Upper lobe of right lung (tissue), 1 donor: ENCODE measurements at regions of chr15 and their contacts with region 1.

Region 1: DNA sequence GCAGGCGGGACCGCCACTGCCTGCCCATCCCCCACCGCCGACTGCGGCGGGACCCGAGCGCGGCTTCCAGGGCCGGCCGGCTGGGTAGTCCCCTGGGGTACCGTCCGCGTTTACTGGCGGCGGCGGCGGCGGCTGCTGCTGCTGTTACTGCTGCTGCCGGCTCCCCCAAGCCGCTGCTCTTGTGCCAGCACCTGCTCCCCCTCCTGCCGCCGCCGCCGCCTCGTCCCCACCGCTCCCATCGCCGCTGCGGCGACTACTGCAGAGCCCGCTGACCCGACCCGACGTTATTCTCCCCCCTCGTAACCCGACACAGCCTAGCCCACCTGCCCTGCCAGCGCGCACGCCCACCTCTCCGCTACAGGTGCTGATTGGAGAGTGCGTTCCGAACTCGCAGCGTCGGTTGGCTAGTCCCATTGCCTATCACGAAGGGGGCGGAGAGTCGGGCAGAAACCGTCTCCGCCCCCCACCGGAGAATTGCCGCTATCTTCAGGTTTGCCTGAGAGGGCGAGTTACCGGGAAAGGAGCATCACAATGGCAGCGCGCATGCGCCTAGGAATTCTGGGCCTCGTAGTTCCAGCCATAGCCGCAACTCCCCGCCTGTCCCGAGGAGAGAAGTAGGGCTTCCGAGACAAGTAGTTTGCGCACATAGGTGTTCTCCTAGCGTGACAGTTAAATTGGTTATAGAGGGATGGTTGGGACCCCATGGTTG is at the start of gene TTBK2:
- DNase-seq: peak; percentile 99
- ATAC-seq: peak; percentile 99
- H3K4me3 ChIP-seq: peak within 1 kb of the TSS; percentile 95
- H3K27ac ChIP-seq: peak within 1 kb of the TSS; percentile 81
- H3K4me1 ChIP-seq: peaks cover 11% of the 10 kb centered on the region
- H3K27me3 ChIP-seq: no peaks in the 10 kb centered on the region
- CTCF ChIP-seq: peak; percentile 37
- total RNA-seq, gene TTBK2: 19.1 TPM

Region 2: GRCh38 chr15:42444415-42445063 is 476.1 kb before region 1 on chr15:
- intact Hi-C with region 1: no loop called
- DNase-seq: no peak
- ATAC-seq: no peak
- H3K4me3 ChIP-seq: no peak overlapping the region
- H3K27ac ChIP-seq: no peak overlapping the region
- H3K4me1 ChIP-seq: no peaks in the 10 kb centered on the region
- H3K27me3 ChIP-seq: no peaks in the 10 kb centered on the region
- CTCF ChIP-seq: no peak

Region 3: DNA sequence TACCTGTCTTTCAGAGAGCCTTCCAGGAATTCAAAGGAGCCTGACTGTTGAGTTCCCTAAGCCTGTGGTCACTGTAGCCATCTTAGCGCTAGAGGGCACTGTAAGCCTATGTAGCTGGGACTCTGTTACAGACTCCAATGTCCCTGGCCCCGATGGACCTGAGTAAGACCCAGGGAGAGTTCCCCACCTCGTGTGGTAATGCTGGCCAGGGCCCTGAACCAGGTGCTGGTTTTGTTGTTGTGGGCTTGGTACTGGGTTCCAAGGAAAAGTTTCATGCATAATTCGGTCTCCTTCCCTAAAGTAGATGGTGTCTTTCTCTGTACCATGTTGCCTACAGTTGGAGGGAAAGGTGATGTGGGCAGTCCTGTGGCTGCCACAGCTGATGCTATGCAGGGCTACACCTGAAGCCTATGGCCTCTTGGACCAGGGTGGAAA is 216.2 kb before region 1 on chr15:
- intact Hi-C with region 1: loop called (anchors 10 kb)
- DNase-seq: peak; percentile 61
- ATAC-seq: peak; percentile 99
- H3K4me3 ChIP-seq: no peak overlapping the region
- H3K27ac ChIP-seq: no peak overlapping the region
- H3K4me1 ChIP-seq: no peaks in the 10 kb centered on the region
- H3K27me3 ChIP-seq: no peaks in the 10 kb centered on the region
- CTCF ChIP-seq: peak; percentile 83